HepG2 (cell line): ENCODE measurements at regions of chr14 and their contacts with region 1.

Region 1: DNA sequence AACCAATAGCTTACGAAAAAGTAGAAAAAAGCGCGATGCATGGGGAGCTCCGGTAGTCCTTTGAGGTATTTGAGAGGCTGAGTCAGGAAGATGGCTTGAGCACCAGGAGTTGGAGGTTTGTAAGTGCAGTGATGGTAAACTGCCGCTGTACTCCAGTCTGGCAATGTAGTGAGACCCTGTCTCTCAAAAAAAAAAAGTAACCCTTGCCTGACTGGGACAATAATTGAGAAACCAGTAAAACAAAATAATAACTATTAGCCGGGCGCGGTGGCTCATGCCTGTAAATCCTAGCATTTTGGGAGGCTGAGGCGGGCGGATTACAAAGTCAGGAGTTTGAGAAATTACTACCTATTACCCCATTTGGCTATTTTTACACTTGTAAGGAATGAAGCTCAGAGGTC is 632 bp upstream of the ACOT2 start:
- DNase-seq: peak; percentile 46
- ATAC-seq: peak; percentile 18; the same call in 2 of the 3 replicates
- H3K4me3 ChIP-seq: peak overlapping the region; percentile 63 to 76 (median 74)
- H3K27ac ChIP-seq: peak overlapping the region; percentile 97
- H3K4me1 ChIP-seq: peaks cover 31% of the 10 kb centered on the region
- H3K27me3 ChIP-seq: no peaks in the 10 kb centered on the region
- CTCF ChIP-seq: no peak
- EP300 ChIP-seq: no peak
- POLR2A ChIP-seq: 0 out of 4 replicates have a peak, but pooled peaks of 1 of the 2 experiments have one; percentile 5
- RAD21 ChIP-seq: no peak

Region 2: DNA sequence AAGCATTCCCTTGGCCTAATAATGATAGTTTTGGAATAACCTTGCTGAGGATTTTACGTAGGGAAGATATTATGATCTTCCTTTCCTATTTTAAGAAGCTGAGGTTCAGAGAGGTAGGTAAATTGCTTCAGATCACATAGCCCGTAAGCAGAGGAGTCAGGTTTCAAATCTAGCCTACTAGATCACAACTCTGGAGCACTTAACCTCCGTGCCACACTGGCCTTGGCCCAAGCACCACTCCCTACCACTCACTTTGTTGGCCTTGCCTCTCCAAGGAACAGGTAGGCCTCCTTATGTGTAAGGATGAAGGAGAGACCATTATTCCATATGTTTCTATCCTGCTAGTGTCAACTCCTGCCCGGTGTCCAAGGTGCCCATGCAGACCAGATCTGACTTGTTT is 43.9 kb before region 1 on chr14:
- CTCF ChIA-PET with region 1: no interaction called
- POLR2A ChIA-PET with region 1: interaction called, 7 read pairs
- in situ Hi-C with region 1: no loop called
- intact Hi-C with region 1: loop called (anchors 10 kb)
- DNase-seq: no peak
- ATAC-seq: no peak
- H3K4me3 ChIP-seq: no peak overlapping the region
- H3K27ac ChIP-seq: no peak overlapping the region
- H3K4me1 ChIP-seq: peaks cover 34% of the 10 kb centered on the region
- H3K27me3 ChIP-seq: no peaks in the 10 kb centered on the region
- CTCF ChIP-seq: no peak
- EP300 ChIP-seq: no peak
- POLR2A ChIP-seq: no peak
- RAD21 ChIP-seq: no peak

Region 3: DNA sequence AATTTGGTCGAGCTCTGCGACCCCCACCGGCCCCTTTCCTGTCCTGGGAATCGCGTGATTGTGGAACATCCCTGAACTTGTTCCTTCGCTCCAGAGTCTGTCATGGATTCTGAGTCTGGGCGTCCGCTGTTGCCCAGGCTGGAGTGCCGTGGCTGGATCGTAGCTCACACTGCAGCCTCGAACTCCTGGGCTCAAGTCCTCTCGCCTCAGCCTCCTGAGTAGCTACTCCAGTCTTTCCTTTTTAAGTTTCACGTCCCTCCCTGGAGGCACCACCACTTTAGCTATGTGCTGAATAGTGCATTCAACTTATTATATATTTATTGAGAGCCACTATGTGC is 44.6 kb after region 1 on chr14:
- CTCF ChIA-PET with region 1: no interaction called
- POLR2A ChIA-PET with region 1: interaction called, 28 read pairs
- in situ Hi-C with region 1: no loop called
- intact Hi-C with region 1: no loop called
- DNase-seq: no peak
- ATAC-seq: peak; percentile 42
- H3K4me3 ChIP-seq: peak overlapping the region; percentile 61 to 78 (median 67); a peak in 5 of 6 replicates
- H3K27ac ChIP-seq: peak overlapping the region; percentile 70
- H3K4me1 ChIP-seq: peaks cover 57% of the 10 kb centered on the region
- H3K27me3 ChIP-seq: no peaks in the 10 kb centered on the region
- CTCF ChIP-seq: no peak
- EP300 ChIP-seq: no peak
- POLR2A ChIP-seq: no peak
- RAD21 ChIP-seq: no peak